ENCODE measurements at regions of chr20 and their contacts with region 1.

Region 1: DNA sequence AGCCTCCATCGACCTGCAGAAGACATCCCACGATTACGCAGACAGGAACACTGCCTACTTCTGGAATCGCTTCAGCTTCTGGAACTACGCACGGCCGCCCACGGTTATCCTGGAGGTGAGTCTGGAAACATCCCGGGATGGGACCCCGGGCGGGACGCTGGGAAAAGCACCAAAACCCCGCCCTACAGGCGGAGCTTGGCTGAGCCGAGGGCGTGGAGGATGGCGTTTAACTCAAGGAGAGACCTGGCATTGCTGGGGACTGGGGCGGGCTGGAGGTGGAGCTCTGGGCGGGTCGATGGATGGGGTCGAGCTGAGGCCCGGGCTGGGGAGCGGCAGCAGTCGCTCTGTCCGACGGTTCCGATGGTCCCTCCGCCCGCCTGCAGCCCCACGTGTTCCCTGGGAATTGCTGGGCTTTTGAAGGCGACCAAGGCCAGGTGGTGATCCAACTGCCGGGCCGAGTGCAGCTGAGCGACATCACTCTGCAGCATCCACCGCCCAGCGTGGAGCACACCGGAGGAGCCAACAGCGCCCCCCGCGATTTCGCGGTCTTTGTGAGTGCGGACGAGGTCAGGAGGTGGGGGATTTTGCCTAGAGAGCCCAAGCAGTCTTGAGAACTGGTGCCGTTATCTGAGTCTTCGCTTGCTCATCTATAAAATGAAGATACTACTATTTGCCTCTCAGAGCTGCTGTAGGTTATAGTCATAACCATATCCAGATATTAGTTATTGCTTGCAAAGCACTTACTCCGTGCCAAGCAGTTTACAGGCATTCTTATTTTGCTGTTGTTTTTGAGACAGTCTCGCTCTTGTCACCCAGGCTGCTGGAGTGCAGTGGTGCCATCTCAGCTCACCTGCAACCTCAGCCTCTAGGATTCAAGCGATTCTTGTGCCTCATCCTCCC is 3.8 kb downstream of the SPAG4 start:
- DNase-seq: peak; percentile 76 to 87 (median 85)
- H3K4me3 ChIP-seq: peak overlapping the region in 6 of 7 experiments; percentile 59 to 87 (median 74)
- H3K27ac ChIP-seq: no peak overlapping the region
- H3K4me1 ChIP-seq: peaks cover 0 to 41% (median 38%) of the 10 kb centered on the region in 4 experiments
- H3K27me3 ChIP-seq: peaks cover 0 to 15% (median 4%) of the 10 kb centered on the region in 5 experiments

Region 2: DNA sequence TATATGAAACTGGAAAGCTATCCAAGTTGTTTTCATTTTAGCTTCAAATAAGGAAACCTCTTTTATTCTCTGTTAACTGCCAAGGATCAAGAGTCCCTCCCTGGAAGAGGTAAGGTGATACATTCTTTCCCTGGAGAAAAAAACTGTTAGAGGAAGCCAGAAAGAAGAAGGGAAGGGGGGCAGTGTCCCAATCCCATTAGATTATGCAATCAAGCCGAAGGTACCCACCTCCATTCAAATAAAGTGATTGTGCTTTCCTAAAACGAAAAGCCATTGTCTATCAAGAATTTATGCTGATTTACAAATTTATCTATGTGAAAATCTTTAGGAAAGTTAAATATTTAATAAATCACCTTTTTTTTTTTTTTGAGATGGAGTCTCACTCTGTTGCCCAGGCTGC is 198.1 kb before region 1 on chr20:
- CTCF ChIA-PET with region 1: no interaction called
- POLR2A ChIA-PET with region 1: no interaction called
- DNase-seq: no peak
- H3K4me3 ChIP-seq: no peak overlapping the region
- H3K27ac ChIP-seq: no peak overlapping the region
- H3K4me1 ChIP-seq: no peaks in the 10 kb centered on the region
- H3K27me3 ChIP-seq: peaks cover 0 to 4% (median 0%) of the 10 kb centered on the region in 5 experiments

Region 3: DNA sequence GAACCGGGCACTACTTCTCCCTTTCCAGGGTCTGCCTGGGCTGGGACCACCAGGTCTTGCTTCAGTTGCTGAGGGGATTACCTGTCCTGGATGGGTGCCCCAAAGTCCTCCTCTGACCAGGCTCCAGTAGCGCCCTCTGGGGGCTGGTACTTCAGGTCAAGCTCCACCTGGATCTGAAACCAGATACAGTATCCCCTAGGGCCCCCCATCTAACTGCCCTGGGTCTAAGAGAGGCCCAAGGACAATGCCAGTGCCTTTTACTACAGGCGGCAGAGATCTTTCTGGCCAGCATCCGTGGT is 15.0 kb before region 1 on chr20:
- CTCF ChIA-PET with region 1: interaction called, 17 read pairs
- POLR2A ChIA-PET with region 1: interaction called, 3 read pairs
- DNase-seq: peak in 1 of 3 donors; percentile 21
- H3K4me3 ChIP-seq: no peak overlapping the region
- H3K27ac ChIP-seq: no peak overlapping the region
- H3K4me1 ChIP-seq: peaks cover 0 to 19% (median 18%) of the 10 kb centered on the region in 4 experiments
- H3K27me3 ChIP-seq: peaks cover 0 to 39% (median 21%) of the 10 kb centered on the region in 5 experiments

Region 4: GRCh38 chr20:35629427-35630145 is 10.1 kb after region 1 on chr20:
- CTCF ChIA-PET with region 1: interaction called, 29 read pairs
- POLR2A ChIA-PET with region 1: no interaction called
- DNase-seq: no peak
- H3K4me3 ChIP-seq: no peak overlapping the region
- H3K27ac ChIP-seq: no peak overlapping the region
- H3K4me1 ChIP-seq: no peaks in the 10 kb centered on the region
- H3K27me3 ChIP-seq: no peaks in the 10 kb centered on the region

Region 5: DNA sequence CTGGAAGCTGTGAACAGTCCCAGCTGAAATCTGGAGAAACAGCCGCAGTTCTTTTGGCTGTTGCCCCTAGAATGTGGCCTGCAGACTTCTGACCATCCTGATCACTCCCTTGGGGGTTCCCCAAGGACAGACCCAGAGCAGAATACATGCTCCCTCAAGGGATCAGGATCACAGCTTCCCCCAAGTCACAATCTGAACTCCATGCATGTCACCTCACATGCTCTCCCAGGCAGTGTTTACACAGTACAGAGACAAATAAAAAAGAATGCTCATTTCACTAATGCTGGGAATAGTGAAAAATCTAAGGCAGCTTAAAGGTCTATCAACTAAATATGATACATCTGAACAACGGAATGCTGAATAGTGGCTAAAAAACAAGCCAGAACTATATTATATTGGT is 16.6 kb after region 1 on chr20:
- CTCF ChIA-PET with region 1: interaction called, 29 read pairs
- POLR2A ChIA-PET with region 1: no interaction called
- DNase-seq: no peak
- H3K4me3 ChIP-seq: no peak overlapping the region
- H3K27ac ChIP-seq: peak overlapping the region in 1 of 2 experiments; percentile 20
- H3K4me1 ChIP-seq: peaks cover 0 to 4% (median 0%) of the 10 kb centered on the region in 4 experiments
- H3K27me3 ChIP-seq: no peaks in the 10 kb centered on the region